GM12878 (cell line): ENCODE measurements at regions of chr10 and their contacts with region 1.

Region 1: DNA sequence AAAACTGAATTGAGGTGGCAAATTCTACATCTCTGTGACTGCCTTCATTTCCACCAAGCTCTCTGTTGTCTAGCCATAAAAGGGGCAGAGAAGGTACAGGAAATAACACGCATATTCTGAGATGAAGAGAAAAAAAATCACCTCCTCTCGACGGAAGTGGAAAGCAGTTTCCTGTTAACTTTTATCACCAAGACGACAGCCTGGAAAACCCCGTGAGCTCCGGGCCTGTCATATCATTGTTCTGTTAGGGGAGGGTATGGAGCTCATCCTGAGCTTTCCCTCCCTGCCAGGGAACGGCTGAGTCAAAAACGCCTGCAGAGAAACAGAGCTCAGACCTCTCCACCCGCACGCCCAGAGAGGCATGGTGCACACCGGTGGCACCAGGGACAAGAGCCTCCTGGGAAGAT is 200.3 kb downstream of the PRPF18 start:
- DNase-seq: peak; percentile 73
- ATAC-seq: peak; percentile 85
- H3K4me3 ChIP-seq: no peak overlapping the region
- H3K27ac ChIP-seq: peak overlapping the region; percentile 78
- H3K4me1 ChIP-seq: peaks cover 18% of the 10 kb centered on the region
- H3K27me3 ChIP-seq: no peaks in the 10 kb centered on the region
- CTCF ChIP-seq: no peak
- EP300 ChIP-seq: peak in 1 of 2 experiments; percentile 64; a peak in 2 of 4 replicates
- POLR2A ChIP-seq: 0 out of 2 replicates have a peak, but pooled peaks have one; percentile 19
- RAD21 ChIP-seq: no peak

Region 2: DNA sequence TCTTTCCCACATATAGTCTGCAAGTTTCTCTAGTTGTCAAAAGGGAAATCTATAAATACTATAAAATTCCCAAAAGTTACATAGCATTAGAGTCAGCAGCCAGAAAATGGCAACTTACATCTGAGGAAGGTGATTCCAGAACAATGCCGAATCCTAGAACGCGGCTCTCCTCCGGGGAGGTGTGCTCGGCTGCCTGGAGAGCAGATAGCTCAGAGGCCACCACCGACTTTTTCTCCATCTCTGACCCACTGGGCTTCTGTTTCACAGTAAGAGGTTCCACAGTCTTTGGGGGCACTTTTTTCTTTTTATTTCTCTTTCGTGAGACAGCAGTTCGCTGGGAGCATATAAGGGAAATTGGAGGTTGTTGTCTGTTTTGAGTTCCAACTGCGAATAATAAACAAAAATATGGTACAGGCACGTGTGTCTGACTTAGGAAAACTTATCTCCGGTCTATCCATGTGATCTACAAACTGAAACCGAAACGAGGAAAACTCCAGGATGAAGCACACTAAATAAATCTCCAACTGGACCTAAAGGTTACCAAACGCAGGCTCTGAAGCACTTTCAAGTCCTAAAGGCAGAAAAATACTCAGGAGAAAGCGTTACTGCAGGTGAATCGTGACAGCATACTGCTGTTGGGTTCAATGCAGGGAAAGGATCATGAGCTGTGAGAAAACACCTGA is 294.4 kb before region 1 on chr10:
- CTCF ChIA-PET with region 1: no interaction called
- POLR2A ChIA-PET with region 1: no interaction called
- RAD21 ChIA-PET with region 1: no interaction called
- SMC1A ChIA-PET with region 1: no interaction called
- in situ Hi-C with region 1: no loop called
- intact Hi-C with region 1: no loop called
- DNase-seq: no peak
- ATAC-seq: no peak
- H3K4me3 ChIP-seq: no peak overlapping the region
- H3K27ac ChIP-seq: no peak overlapping the region
- H3K4me1 ChIP-seq: no peaks in the 10 kb centered on the region
- H3K27me3 ChIP-seq: peaks cover 2 to 5% of the 10 kb centered on the region in 2 experiments; a peak in 2 of 4 replicates
- CTCF ChIP-seq: no peak
- EP300 ChIP-seq: no peak
- POLR2A ChIP-seq: no peak
- RAD21 ChIP-seq: no peak

Region 3: DNA sequence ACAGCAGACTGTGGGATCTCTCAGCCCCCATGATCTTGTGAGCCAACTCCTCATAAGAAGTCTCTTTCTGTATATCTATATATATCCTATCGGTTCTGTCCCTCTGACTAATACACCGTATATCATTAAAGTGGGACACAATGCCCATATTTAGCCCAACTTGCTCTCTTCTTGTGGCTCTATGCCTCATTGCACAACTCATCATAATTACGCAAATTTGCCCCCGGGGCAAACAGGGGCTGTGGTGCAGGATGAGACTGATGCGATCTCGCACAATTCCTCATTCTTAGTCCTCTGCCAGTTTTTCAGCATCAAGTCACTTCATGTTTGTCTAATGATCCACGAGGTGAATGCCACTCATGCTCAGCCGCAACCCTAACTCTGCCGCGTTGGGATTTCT is 17.1 kb before region 1 on chr10:
- CTCF ChIA-PET with region 1: interaction called, 5 read pairs
- POLR2A ChIA-PET with region 1: interaction called, 3 read pairs
- RAD21 ChIA-PET with region 1: interaction called, 8 read pairs
- SMC1A ChIA-PET with region 1: interaction called, 12 read pairs
- in situ Hi-C with region 1: no loop called
- intact Hi-C with region 1: no loop called
- DNase-seq: no peak
- ATAC-seq: peak; percentile 78
- H3K4me3 ChIP-seq: no peak overlapping the region
- H3K27ac ChIP-seq: no peak overlapping the region
- H3K4me1 ChIP-seq: peaks cover 11% of the 10 kb centered on the region
- H3K27me3 ChIP-seq: no peaks in the 10 kb centered on the region
- CTCF ChIP-seq: no peak
- EP300 ChIP-seq: peak; percentile 14 to 25; a peak in 2 of 4 replicates
- POLR2A ChIP-seq: no peak
- RAD21 ChIP-seq: no peak

Region 4: DNA sequence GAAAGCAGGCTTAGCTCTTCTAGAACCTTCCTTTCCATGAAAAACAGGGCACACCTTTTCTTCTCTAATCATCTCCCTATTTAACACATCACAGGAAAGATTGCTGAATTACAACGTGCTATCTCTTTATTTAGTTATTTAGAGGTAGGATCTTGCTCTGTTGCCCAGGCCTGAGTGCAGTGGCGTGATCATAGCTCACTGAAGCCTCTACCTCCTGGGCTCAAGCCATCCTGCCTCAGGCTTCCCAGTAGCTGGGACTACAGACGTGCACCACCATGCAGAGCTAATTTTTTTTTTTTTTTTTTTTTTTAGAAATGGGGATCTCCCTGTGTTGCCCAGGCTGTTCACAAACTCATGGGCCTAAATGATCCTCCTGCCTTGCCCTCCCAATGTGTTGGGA is 50.9 kb after region 1 on chr10:
- CTCF ChIA-PET with region 1: no interaction called
- POLR2A ChIA-PET with region 1: no interaction called
- RAD21 ChIA-PET with region 1: no interaction called
- SMC1A ChIA-PET with region 1: no interaction called
- in situ Hi-C with region 1: no loop called
- intact Hi-C with region 1: no loop called
- DNase-seq: no peak
- ATAC-seq: no peak
- H3K4me3 ChIP-seq: no peak overlapping the region
- H3K27ac ChIP-seq: no peak overlapping the region
- H3K4me1 ChIP-seq: no peaks in the 10 kb centered on the region
- H3K27me3 ChIP-seq: no peaks in the 10 kb centered on the region
- CTCF ChIP-seq: no peak
- EP300 ChIP-seq: no peak
- POLR2A ChIP-seq: no peak
- RAD21 ChIP-seq: no peak

Region 5: GRCh38 chr10:14009371-14010100 is 222.5 kb after region 1 on chr10:
- CTCF ChIA-PET with region 1: interaction called, 3 read pairs
- POLR2A ChIA-PET with region 1: interaction called, 9 read pairs
- RAD21 ChIA-PET with region 1: interaction called, 20 read pairs
- SMC1A ChIA-PET with region 1: interaction called, 21 read pairs
- in situ Hi-C with region 1: no loop called
- intact Hi-C with region 1: loop called (anchors 5 kb)
- DNase-seq: peak; percentile 96
- ATAC-seq: peak; percentile 75
- H3K4me3 ChIP-seq: peak overlapping the region; percentile 25; the same call in 1 of the 2 replicates
- H3K27ac ChIP-seq: peak overlapping the region; percentile 72
- H3K4me1 ChIP-seq: peaks cover 11% of the 10 kb centered on the region
- H3K27me3 ChIP-seq: peaks cover 0 to 3% of the 10 kb centered on the region in 2 experiments; a peak in 1 of 4 replicates
- CTCF ChIP-seq: no peak
- EP300 ChIP-seq: peak; percentile 49 to 84; a peak in 3 of 4 replicates
- POLR2A ChIP-seq: no peak
- RAD21 ChIP-seq: no peak

Region 6: GRCh38 chr10:14093730-14094484 is 306.9 kb after region 1 on chr10:
- CTCF ChIA-PET with region 1: interaction called, 20 read pairs
- POLR2A ChIA-PET with region 1: interaction called, 4 read pairs
- RAD21 ChIA-PET with region 1: interaction called, 32 read pairs
- SMC1A ChIA-PET with region 1: interaction called, 30 read pairs
- in situ Hi-C with region 1: loop called (anchors 5 kb)
- intact Hi-C with region 1: loop called (anchors 2 kb)
- DNase-seq: no peak
- ATAC-seq: peak; percentile 51; the same call in 1 of the 3 replicates
- H3K4me3 ChIP-seq: no peak overlapping the region
- H3K27ac ChIP-seq: no peak overlapping the region
- H3K4me1 ChIP-seq: no peaks in the 10 kb centered on the region
- H3K27me3 ChIP-seq: no peaks in the 10 kb centered on the region
- CTCF ChIP-seq: peak in 2 of 3 experiments; percentile 32 to 46; a peak in 3 of 6 replicates
- EP300 ChIP-seq: no peak
- POLR2A ChIP-seq: no peak
- RAD21 ChIP-seq: peak; percentile 47

Region 7: GRCh38 chr10:14191871-14192270 is 404.9 kb after region 1 on chr10:
- CTCF ChIA-PET with region 1: interaction called, 11 read pairs
- POLR2A ChIA-PET with region 1: no interaction called
- RAD21 ChIA-PET with region 1: interaction called, 7 read pairs
- SMC1A ChIA-PET with region 1: interaction called, 9 read pairs
- in situ Hi-C with region 1: no loop called
- intact Hi-C with region 1: no loop called
- DNase-seq: no peak
- ATAC-seq: no peak
- H3K4me3 ChIP-seq: no peak overlapping the region
- H3K27ac ChIP-seq: no peak overlapping the region
- H3K4me1 ChIP-seq: no peaks in the 10 kb centered on the region
- H3K27me3 ChIP-seq: peaks cover 0 to 3% of the 10 kb centered on the region in 2 experiments; a peak in 2 of 4 replicates
- CTCF ChIP-seq: no peak
- EP300 ChIP-seq: no peak
- POLR2A ChIP-seq: no peak
- RAD21 ChIP-seq: no peak

Region 8: GRCh38 chr10:14225379-14226150 is 438.5 kb after region 1 on chr10:
- CTCF ChIA-PET with region 1: no interaction called
- POLR2A ChIA-PET with region 1: no interaction called
- RAD21 ChIA-PET with region 1: no interaction called
- SMC1A ChIA-PET with region 1: no interaction called
- in situ Hi-C with region 1: no loop called
- intact Hi-C with region 1: no loop called
- DNase-seq: no peak
- ATAC-seq: no peak
- H3K4me3 ChIP-seq: no peak overlapping the region
- H3K27ac ChIP-seq: no peak overlapping the region
- H3K4me1 ChIP-seq: no peaks in the 10 kb centered on the region
- H3K27me3 ChIP-seq: no peaks in the 10 kb centered on the region; a peak in 2 of 4 replicates
- CTCF ChIP-seq: no peak
- EP300 ChIP-seq: no peak
- POLR2A ChIP-seq: no peak
- RAD21 ChIP-seq: no peak